Calu3 (cell line): ENCODE measurements at regions of chr3 and their contacts with region 1.

Region 1: GRCh38 chr3:190701096-190701532 is 161.4 kb downstream of the GMNC start:
- DNase-seq: peak; percentile 81
- H3K4me3 Mint-ChIP-seq: no peak overlapping the region
- H3K27ac Mint-ChIP-seq: peak overlapping the region; percentile 33
- H3K4me1 Mint-ChIP-seq: peaks cover 43% of the 10 kb centered on the region
- H3K27me3 Mint-ChIP-seq: no peaks in the 10 kb centered on the region
- CTCF ChIP-seq: peak; percentile 85

Region 2: GRCh38 chr3:189961525-189962161 is 739.5 kb before region 1 on chr3:
- CTCF ChIA-PET with region 1: no interaction called
- intact Hi-C with region 1: loop called (anchors 2 kb)
- DNase-seq: peak; percentile 91
- H3K4me3 Mint-ChIP-seq: no peak overlapping the region
- H3K27ac Mint-ChIP-seq: no peak overlapping the region
- H3K4me1 Mint-ChIP-seq: peaks cover 11% of the 10 kb centered on the region
- H3K27me3 Mint-ChIP-seq: no peaks in the 10 kb centered on the region
- CTCF ChIP-seq: peak; percentile 90

Region 3: GRCh38 chr3:190513409-190514162 is 187.5 kb before region 1 on chr3 and contains the start of gene IL1RAP:
- CTCF ChIA-PET with region 1: interaction called, 3 read pairs
- intact Hi-C with region 1: loop called (anchors 2 kb)
- DNase-seq: peak; percentile 98
- H3K4me3 Mint-ChIP-seq: peak within 1 kb of the TSS; percentile 90
- H3K27ac Mint-ChIP-seq: peak within 1 kb of the TSS; percentile 90
- H3K4me1 Mint-ChIP-seq: peaks cover 38% of the 10 kb centered on the region
- H3K27me3 Mint-ChIP-seq: no peaks in the 10 kb centered on the region
- CTCF ChIP-seq: peak; percentile 92
- total RNA-seq, gene IL1RAP: 186 and 239 TPM in 2 replicates

Region 4: DNA sequence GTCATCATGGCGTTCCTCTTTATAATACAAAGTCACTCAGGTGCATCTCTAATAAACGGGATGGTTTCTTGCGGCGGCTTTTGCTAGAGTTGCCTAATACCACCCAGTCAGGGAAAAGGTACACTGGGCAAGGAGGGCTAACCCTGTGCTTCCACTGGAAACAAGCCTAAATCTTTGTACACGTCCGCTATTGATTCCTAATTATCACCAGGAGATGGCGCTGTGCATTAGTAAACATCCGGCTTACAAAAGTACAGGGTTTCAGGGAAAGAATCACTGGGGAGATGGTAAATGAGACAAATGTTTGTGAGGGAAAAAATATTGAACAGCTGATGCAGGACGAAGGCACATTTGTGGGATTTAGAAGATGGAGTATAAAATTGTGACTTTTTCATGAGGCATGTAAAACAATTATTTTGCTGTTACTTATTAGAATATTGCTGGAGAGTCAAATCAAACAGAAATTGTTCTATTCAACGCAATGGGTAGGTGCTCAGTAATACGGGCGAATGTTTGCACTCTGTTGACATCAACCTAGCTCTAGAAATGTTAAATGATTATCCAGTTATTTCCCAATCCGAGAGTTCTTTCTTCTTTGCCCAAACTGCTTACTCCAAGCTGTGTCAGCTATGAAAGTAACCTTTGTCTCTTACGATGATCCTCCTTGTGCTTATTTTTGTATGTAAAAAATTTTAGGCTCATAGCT is 110.8 kb after region 1 on chr3:
- CTCF ChIA-PET with region 1: interaction called, 5 read pairs
- intact Hi-C with region 1: loop called (anchors 1 kb)
- DNase-seq: peak; percentile 72
- H3K4me3 Mint-ChIP-seq: peak overlapping the region; percentile 69
- H3K27ac Mint-ChIP-seq: peak overlapping the region; percentile 59
- H3K4me1 Mint-ChIP-seq: peaks cover 23% of the 10 kb centered on the region
- H3K27me3 Mint-ChIP-seq: no peaks in the 10 kb centered on the region
- CTCF ChIP-seq: peak; percentile 90

Region 5: DNA sequence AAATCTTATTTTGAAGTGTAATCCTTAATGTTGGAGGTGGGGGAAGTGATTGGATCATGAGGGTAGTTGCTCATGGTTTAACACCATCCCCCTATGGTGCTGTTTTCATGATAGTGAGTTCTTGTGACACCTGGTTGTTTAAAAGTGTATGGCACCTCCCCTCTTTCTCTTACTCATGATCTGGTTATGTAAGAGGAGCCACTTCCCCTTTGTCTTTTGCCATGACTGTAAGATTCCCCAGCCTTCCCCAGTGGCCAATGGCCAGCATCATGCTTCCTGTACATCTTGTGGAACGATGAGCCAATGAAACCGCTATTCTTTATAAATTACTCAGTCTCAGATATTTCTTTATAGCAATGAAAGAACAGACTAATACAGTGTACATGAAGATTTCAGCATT is 201.2 kb after region 1 on chr3:
- CTCF ChIA-PET with region 1: no interaction called
- intact Hi-C with region 1: no loop called
- DNase-seq: no peak
- H3K4me3 Mint-ChIP-seq: no peak overlapping the region
- H3K27ac Mint-ChIP-seq: no peak overlapping the region
- H3K4me1 Mint-ChIP-seq: no peaks in the 10 kb centered on the region
- H3K27me3 Mint-ChIP-seq: no peaks in the 10 kb centered on the region
- CTCF ChIP-seq: no peak

Region 6: GRCh38 chr3:191051037-191051436 is 349.9 kb after region 1 on chr3:
- CTCF ChIA-PET with region 1: interaction called, 37 read pairs
- intact Hi-C with region 1: loop called (anchors 1 kb)
- DNase-seq: no peak
- H3K4me3 Mint-ChIP-seq: no peak overlapping the region
- H3K27ac Mint-ChIP-seq: no peak overlapping the region
- H3K4me1 Mint-ChIP-seq: no peaks in the 10 kb centered on the region
- H3K27me3 Mint-ChIP-seq: no peaks in the 10 kb centered on the region
- CTCF ChIP-seq: peak; percentile 39